Astrocyte of the cerebellum (primary cell): ENCODE measurements at regions of chr14 and their contacts with region 1.

Region 1: DNA sequence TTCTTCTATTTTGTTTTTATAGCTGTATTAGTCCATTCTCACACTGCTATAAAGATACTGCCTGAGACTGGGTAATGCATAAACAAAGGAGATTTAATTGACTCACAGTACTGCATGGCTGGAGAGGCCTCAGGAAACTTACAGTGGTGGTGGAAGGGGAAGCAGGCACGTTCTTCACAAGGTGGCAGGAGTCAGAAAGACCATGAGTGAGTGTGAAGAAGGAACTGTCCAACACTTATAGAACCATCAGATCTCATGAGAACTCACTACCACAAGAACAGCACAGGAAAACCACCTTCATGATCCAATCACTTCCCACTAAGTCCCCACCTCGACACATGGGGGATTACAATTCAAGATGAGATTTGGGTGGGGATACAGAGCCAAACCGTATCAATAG is 42.3 kb downstream of the ARMH4 start:
- DNase-seq: no peak
- H3K4me3 ChIP-seq: no peak overlapping the region
- CTCF ChIP-seq: no peak

Region 2: DNA sequence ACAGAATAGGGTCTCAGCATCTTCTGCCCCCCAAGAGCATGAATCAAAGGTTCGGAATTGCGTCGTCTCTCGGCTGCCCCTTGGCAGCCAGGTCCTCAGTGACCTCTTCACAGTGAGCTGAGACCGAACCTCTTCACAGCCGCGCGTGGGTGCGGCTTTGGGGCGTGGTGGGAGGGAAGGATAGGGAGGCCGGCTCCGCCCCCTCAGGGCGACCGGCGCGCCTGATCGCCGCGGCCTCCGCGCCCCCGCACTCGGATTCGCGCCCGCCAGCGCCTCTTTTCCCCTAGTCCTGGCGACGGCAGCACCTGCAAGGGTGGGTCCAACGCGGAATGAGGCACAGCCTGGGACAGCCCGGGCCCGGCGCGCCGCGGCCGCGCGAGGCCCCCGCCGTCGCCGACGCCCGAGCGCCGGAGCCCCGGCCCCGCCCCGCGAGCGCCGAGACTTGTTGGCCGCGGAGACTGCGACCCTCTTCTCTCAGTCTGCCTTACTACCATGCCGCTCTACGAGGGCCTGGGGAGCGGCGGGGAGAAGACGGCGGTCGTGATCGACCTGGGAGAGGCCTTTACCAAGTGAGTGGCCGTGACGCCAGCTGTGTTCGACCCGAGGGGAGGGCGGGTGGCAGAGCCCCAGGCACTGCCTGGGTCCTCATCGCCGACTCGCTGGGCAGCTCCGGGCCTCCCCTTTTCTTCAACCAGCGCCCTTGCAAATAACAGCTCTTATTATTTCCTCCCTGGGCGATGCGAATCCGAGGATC is 90.2 kb after region 1 on chr14 and contains the start of gene ACTR10:
- in situ Hi-C with region 1: loop called (anchors 5 kb)
- DNase-seq: peak; percentile 26
- H3K4me3 ChIP-seq: peak within 1 kb of the TSS; percentile 81
- CTCF ChIP-seq: no peak